IMR-90 (cell line): ENCODE measurements at regions of chr15 and their contacts with region 1.

Region 1: DNA sequence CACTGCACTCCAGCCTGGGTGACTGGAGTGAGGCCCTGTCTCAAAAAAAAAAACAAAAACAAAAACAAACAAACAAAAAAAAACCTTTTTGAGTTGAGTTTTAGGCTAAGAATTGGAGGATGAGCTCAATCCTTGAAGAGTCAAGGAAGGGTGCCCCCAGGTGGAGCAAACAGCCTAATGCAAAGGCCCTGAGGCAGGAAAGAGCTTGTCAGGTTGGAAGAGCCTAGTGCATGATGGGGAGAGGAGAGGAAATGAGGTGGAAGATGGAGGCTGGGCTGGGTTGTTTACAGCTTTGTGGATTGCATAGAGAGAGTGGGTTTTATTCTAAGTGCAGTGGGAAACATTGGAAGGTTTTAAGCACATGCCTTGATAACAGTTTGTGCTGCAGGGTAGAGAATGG is 2.1 kb upstream of the SNX22 start:
- DNase-seq: no peak
- ATAC-seq: no peak
- H3K4me3 ChIP-seq: no peak overlapping the region
- H3K27ac ChIP-seq: no peak overlapping the region
- H3K4me1 ChIP-seq: peaks cover 2% of the 10 kb centered on the region; the same call in 1 of the 2 replicates
- H3K27me3 ChIP-seq: peaks cover 15% of the 10 kb centered on the region
- CTCF ChIP-seq: 0 out of 2 replicates have a peak, but pooled peaks have one; percentile 19
- POLR2A ChIP-seq: no peak
- RAD21 ChIP-seq: no peak

Region 2: DNA sequence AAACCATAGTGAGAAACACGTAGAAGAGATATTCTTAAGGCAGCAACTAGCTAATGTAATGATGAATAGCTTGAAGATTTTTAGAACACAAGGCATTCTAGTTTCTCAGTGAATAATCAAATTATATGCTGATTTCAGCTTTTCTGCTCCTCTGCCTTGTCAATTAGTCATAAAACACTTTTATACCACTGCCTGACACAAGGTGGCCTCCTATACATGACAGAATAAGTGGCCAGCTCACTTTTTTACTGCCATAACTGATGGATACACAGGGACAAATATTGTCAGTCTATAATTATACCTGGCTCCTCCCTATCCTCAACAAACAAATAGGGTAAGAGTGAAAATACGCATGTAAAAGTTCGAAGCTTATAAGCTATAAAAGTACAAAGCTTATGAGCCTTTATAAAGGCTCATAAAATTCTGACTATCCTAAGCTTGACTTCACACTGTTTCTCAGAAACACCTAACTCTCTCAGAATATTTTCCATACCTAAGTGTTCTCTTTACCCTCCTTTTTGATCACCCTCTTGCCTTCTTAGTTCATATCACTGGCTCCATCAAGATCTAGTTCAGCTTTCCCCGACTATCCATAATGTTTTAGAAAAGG is 397.2 kb before region 1 on chr15:
- CTCF ChIA-PET with region 1: no interaction called
- POLR2A ChIA-PET with region 1: no interaction called
- dilution Hi-C with region 1: no loop called
- in situ Hi-C with region 1: no loop called
- intact Hi-C with region 1: no loop called
- DNase-seq: peak; percentile 65
- ATAC-seq: peak; percentile 84
- H3K4me3 ChIP-seq: no peak overlapping the region
- H3K27ac ChIP-seq: no peak overlapping the region
- H3K4me1 ChIP-seq: no peaks in the 10 kb centered on the region; the same call in 1 of the 2 replicates
- H3K27me3 ChIP-seq: no peaks in the 10 kb centered on the region
- CTCF ChIP-seq: peak; percentile 77
- POLR2A ChIP-seq: no peak
- RAD21 ChIP-seq: peak; percentile 79

Region 3: GRCh38 chr15:63915873-63916771 is 233.3 kb before region 1 on chr15:
- CTCF ChIA-PET with region 1: no interaction called
- POLR2A ChIA-PET with region 1: no interaction called
- dilution Hi-C with region 1: no loop called
- in situ Hi-C with region 1: no loop called
- intact Hi-C with region 1: no loop called
- DNase-seq: peak; percentile 53
- ATAC-seq: peak; percentile 94
- H3K4me3 ChIP-seq: no peak overlapping the region
- H3K27ac ChIP-seq: no peak overlapping the region
- H3K4me1 ChIP-seq: peaks cover 7% of the 10 kb centered on the region; the same call in 1 of the 2 replicates
- H3K27me3 ChIP-seq: peaks cover 11% of the 10 kb centered on the region
- CTCF ChIP-seq: peak; percentile 48
- POLR2A ChIP-seq: no peak
- RAD21 ChIP-seq: peak; percentile 42

Region 4: DNA sequence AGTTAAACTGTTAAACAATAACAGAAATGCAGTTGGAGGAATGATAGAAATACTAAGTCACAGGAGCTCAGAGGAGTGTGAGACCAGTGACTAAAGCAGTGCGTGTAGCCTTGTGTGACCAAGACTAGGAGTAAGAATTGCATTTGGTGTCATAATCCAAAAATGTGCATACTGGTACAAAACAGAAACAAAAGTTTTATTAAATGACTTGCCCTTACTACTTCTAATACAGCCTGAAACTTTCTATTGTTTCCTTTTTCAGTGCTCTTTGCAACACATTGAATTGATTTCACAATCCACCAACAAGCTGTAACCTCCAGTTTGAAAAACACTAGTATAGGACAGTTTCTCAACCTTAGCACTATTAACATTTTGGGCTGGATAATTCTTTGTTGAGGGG is 36.5 kb before region 1 on chr15:
- CTCF ChIA-PET with region 1: no interaction called
- POLR2A ChIA-PET with region 1: no interaction called
- dilution Hi-C with region 1: no loop called
- in situ Hi-C with region 1: no loop called
- intact Hi-C with region 1: loop called (anchors 5 kb)
- DNase-seq: peak; percentile 52
- ATAC-seq: peak; percentile 57; the same call in 1 of the 2 replicates
- H3K4me3 ChIP-seq: no peak overlapping the region
- H3K27ac ChIP-seq: no peak overlapping the region
- H3K4me1 ChIP-seq: peaks cover 4% of the 10 kb centered on the region
- H3K27me3 ChIP-seq: no peaks in the 10 kb centered on the region
- CTCF ChIP-seq: no peak
- POLR2A ChIP-seq: no peak
- RAD21 ChIP-seq: no peak

Region 5: GRCh38 chr15:64398575-64398974 is 249.2 kb after region 1 on chr15:
- CTCF ChIA-PET with region 1: no interaction called
- POLR2A ChIA-PET with region 1: no interaction called
- dilution Hi-C with region 1: no loop called
- in situ Hi-C with region 1: no loop called
- intact Hi-C with region 1: no loop called
- DNase-seq: no peak
- ATAC-seq: no peak
- H3K4me3 ChIP-seq: no peak overlapping the region
- H3K27ac ChIP-seq: no peak overlapping the region
- H3K4me1 ChIP-seq: no peaks in the 10 kb centered on the region
- H3K27me3 ChIP-seq: no peaks in the 10 kb centered on the region
- CTCF ChIP-seq: no peak
- POLR2A ChIP-seq: no peak
- RAD21 ChIP-seq: no peak